Gastrocnemius medialis (tissue), 4 donors: ENCODE measurements at regions of chr11 and their contacts with region 1.

Region 1: GRCh38 chr11:88051396-88051795 is 123.8 kb downstream of the RAB38 start:
- DNase-seq: no peak
- ATAC-seq: no peak
- H3K4me3 ChIP-seq: no peak overlapping the region
- H3K27ac ChIP-seq: no peak overlapping the region
- H3K4me1 ChIP-seq: no peaks in the 10 kb centered on the region
- H3K27me3 ChIP-seq: no peaks in the 10 kb centered on the region
- CTCF ChIP-seq: no peak
- POLR2A ChIP-seq: no peak

Region 2: GRCh38 chr11:87726506-87726905 is 324.9 kb before region 1 on chr11:
- in situ Hi-C with region 1: no loop called
- intact Hi-C with region 1: no loop called
- DNase-seq: no peak
- ATAC-seq: no peak
- H3K4me3 ChIP-seq: no peak overlapping the region
- H3K27ac ChIP-seq: no peak overlapping the region
- H3K4me1 ChIP-seq: no peaks in the 10 kb centered on the region
- H3K27me3 ChIP-seq: no peaks in the 10 kb centered on the region
- CTCF ChIP-seq: no peak
- POLR2A ChIP-seq: no peak

Region 3: DNA sequence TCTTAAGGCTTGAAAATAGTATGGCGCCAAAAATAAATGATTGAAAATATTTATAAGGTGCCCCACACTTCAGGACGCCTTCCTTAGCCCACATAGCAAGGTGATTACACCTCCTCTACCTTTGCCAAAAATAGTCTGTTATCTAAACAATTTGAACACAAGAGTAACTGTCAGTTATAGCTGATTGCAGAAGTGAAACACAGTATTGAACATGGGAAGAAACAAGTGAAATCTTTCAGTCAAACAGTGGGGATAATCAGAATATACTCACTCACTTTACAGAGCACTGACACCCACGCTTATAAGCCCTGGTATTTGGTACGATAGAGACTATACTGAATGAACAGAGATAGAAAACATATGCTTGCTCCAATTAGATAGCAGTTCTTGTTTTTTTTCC is 79.3 kb before region 1 on chr11:
- in situ Hi-C with region 1: loop called in 1 of 4 experiments (anchors 25 kb)
- intact Hi-C with region 1: no loop called
- DNase-seq: no peak
- ATAC-seq: no peak
- H3K4me3 ChIP-seq: no peak overlapping the region
- H3K27ac ChIP-seq: no peak overlapping the region
- H3K4me1 ChIP-seq: no peaks in the 10 kb centered on the region
- H3K27me3 ChIP-seq: no peaks in the 10 kb centered on the region
- CTCF ChIP-seq: no peak
- POLR2A ChIP-seq: no peak